Activated T-helper 1 cell treated with anti-CD3 and anti-CD28 coated beads, Interleukin-12 subunit alpha, Interleukin-12 subunit beta, Interleukin-2, Interleukin-4 antibody, amounts not matched to agents 30 ng/mL and 10 ng/mL and 1 ng/mL, durations not matched to agents 14 hours and 24 hours and 36 hours (primary cell): ENCODE measurements at regions of chr9 and their contacts with region 1.

Region 1: DNA sequence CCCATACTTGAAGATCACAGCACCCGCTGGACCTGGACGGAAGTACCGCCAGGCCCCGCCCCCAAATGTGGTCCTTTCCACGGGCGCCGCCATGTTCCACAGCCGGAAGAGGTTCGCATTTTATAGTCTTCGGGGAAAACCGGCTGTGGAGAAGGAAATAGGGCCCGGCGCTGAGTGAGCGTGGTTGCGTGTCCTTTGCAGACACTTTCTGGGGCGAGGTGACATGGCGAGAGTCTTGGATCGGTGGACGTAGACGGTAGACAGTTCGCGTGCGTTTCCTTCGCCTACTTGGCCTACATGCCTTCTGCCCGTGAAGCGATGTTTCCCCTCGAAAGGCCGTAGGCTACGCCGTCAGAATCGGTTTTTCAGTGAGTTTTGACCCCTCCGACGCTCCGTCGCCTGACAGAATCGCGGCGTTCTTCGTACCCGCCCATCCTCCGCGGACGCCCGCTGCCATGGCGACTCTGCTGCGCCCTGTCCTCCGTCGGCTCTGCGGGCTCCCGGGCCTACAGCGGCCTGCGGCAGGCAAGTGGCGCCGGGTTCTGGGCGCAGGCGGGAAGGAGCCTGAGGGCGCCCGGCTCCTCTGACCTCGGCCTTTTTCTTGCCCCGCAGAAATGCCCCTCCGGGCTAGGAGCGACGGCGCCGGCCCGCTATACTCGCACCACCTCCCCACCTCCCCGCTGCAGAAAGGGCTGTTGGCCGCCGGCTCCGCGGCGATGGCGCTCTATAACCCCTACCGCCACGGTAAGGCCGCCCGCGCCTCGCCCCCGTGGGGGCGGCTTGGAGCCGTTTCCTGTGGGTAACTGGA is at the starts of genes COQ4 and TRUB2:
- DNase-seq: peak; percentile 91
- H3K4me3 Mint-ChIP-seq: peak within 1 kb of the TSS; percentile 98
- H3K27ac Mint-ChIP-seq: peak within 1 kb of the TSS; percentile 100
- H3K4me1 Mint-ChIP-seq: peaks cover 12% of the 10 kb centered on the region
- H3K27me3 Mint-ChIP-seq: peaks cover 2% of the 10 kb centered on the region
- total RNA-seq, gene COQ4: 59.0 and 59.5 TPM in 2 replicates
- total RNA-seq, gene TRUB2: 41.8 and 44.0 TPM in 2 replicates

Region 2: GRCh38 chr9:128127990-128128835 is 194.4 kb before region 1 on chr9:
- intact Hi-C with region 1: loop called (anchors 1 kb)
- DNase-seq: peak; percentile 79
- H3K4me3 Mint-ChIP-seq: peak overlapping the region; percentile 90
- H3K27ac Mint-ChIP-seq: peak overlapping the region; percentile 99
- H3K4me1 Mint-ChIP-seq: peaks cover 39% of the 10 kb centered on the region
- H3K27me3 Mint-ChIP-seq: peaks cover 19% of the 10 kb centered on the region

Region 3: DNA sequence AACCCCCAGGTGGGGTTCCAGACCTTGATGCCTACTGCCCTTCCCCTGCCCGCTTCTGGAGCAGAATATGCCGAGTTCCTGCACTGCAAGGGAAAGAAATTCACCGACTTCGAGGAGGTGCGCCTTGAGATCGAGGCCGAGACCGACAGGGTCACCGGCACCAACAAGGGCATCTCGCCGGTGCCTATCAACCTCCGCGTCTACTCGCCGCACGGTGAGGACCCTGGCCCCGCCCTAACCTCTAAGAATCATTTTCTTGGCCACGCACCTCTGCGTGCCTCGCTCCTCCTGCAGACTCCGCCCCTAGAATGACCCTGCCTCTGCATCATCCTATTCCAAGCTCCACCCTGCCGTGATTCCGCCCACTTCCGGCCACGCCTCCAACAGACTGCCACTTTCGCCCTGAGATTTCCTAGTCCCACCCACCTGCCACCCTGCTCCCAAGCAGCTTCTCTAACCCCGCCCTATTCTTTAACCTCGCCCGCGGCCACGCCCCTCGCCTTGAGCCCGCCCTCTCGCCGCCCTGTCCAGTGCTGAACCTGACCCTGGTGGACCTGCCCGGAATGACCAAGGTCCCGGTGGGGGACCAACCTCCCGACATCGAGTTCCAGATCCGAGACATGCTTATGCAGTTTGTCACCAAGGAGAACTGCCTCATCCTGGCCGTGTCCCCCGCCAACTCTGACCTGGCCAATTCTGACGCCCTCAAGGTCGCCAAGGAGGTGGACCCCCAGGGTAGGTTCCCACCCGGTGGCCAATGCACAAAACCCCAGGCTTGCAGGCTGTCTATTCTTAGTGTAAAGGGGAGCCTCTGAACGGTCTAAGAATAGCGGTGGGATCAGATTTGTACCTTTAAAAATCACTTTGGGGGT is 103.9 kb before region 1 on chr9:
- intact Hi-C with region 1: loop called (anchors 1 kb)
- DNase-seq: peak; percentile 92
- H3K4me3 Mint-ChIP-seq: peak overlapping the region; percentile 75
- H3K27ac Mint-ChIP-seq: peak overlapping the region; percentile 4
- H3K4me1 Mint-ChIP-seq: peaks cover 7% of the 10 kb centered on the region
- H3K27me3 Mint-ChIP-seq: peaks cover 1% of the 10 kb centered on the region

Region 4: DNA sequence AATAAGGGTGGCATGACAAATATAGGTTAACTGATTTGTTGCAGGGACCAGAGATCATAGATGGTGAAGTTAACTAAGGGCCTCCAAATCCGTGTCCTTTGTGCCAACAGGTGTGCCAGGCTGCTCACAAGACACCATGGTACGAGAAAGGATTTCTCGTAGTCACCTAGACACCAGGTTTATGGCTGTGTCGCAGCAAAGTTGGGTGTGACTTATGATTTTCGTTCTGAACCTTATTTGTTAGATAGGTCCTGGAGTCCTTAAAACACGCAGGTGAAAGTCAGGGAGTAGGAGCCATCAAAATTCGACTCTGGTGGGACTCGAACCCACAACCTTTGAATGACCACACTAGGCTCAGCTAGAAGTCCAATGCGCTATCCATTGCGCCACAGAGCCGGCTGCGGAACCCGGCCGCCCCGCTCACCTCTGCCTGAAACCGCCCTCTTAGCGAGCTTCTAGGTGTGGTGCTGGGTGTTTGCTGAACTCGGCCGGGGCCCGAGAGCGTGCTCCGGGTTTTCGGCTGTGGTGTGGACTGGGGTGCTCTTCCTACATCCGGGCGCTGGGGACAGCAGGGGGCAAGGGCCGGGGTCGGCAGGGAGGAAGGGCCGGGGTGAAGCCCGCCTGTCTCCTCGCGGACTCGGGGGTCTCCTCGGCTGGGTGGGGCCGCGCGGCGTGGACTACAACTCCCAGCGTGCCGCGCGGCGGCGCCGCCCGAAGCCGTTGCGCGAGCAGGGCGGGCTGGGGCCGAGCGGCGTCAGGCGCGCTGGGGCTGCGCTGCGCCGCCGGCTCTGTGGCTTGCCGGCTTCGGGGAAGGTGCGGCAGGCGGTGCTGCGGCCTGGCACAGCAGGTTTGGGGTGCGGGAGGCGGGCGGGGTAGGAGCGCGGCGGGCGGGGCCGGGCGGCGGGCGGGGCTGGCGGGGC is 17.4 kb after region 1 on chr9 and contains the start of gene SLC27A4:
- intact Hi-C with region 1: loop called (anchors 1 kb)
- DNase-seq: peak; percentile 82
- H3K4me3 Mint-ChIP-seq: peak within 1 kb of the TSS; percentile 94
- H3K27ac Mint-ChIP-seq: peak within 1 kb of the TSS; percentile 88
- H3K4me1 Mint-ChIP-seq: peaks cover 6% of the 10 kb centered on the region
- H3K27me3 Mint-ChIP-seq: no peaks in the 10 kb centered on the region
- total RNA-seq, gene SLC27A4: 41.8 and 43.2 TPM in 2 replicates

Region 5: GRCh38 chr9:128420060-128420650 is 97.5 kb after region 1 on chr9:
- intact Hi-C with region 1: loop called (anchors 1 kb)
- DNase-seq: peak; percentile 65
- H3K4me3 Mint-ChIP-seq: peak overlapping the region; percentile 78
- H3K27ac Mint-ChIP-seq: no peak overlapping the region
- H3K4me1 Mint-ChIP-seq: peaks cover 16% of the 10 kb centered on the region
- H3K27me3 Mint-ChIP-seq: peaks cover 45% of the 10 kb centered on the region

Region 6: GRCh38 chr9:128587453-128587852 is 264.8 kb after region 1 on chr9:
- intact Hi-C with region 1: no loop called
- DNase-seq: peak; percentile 58
- H3K4me3 Mint-ChIP-seq: peak overlapping the region; percentile 16
- H3K27ac Mint-ChIP-seq: peak overlapping the region; percentile 70
- H3K4me1 Mint-ChIP-seq: peaks cover 11% of the 10 kb centered on the region
- H3K27me3 Mint-ChIP-seq: no peaks in the 10 kb centered on the region

Region 7: DNA sequence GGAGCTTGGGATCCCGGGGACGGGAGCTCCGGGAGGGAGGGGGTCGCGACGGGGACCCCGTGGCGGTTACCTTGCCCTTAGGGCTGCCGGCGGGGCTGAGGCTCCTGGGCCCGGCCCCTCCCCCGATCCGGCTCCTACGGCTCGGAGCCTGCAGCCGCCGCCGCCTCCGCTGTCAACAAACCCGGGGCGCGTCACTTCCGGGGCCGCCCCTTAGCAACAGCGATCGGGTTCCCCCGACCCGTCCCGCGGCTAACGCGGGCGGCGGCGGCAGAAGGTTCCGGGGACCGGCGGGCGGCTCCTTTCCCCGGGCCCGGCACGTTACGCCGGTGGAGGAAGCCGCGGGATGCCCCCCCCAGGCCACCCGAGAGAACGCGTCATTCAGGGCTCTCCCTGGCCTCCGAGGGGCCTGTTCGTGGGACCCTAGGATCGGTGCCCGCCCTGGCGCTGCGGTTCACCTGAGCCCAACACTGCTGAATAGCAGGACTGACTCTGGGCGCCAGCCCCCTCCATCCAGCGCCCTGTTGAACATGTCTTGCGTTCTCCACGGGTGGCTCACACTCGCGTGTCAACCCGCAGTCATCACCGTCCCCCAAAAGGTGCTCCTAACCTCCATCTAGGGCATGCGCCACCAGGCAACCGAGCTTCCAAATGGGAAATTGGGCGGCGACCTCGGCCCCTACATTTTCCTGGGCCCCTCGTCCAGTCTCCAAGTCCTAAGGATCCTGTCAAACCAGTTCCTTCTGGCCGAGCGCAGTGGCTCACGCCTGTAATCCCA is 449.3 kb after region 1 on chr9 and contains the start of gene ZER1:
- intact Hi-C with region 1: loop called (anchors 5 kb)
- DNase-seq: peak; percentile 92
- H3K4me3 Mint-ChIP-seq: peak within 1 kb of the TSS; percentile 98
- H3K27ac Mint-ChIP-seq: peak within 1 kb of the TSS; percentile 95
- H3K4me1 Mint-ChIP-seq: peaks cover 14% of the 10 kb centered on the region
- H3K27me3 Mint-ChIP-seq: no peaks in the 10 kb centered on the region
- total RNA-seq, gene ZER1: 21.1 and 21.5 TPM in 2 replicates